ENCODE measurements at regions of chrX and their contacts with region 1.

Region 1: GRCh38 chrX:124476562-124476961 is 130.2 kb downstream of the SH2D1A start:
- DNase-seq: no peak
- ATAC-seq: no peak
- H3K4me3 ChIP-seq: no peak overlapping the region
- H3K27ac ChIP-seq: no peak overlapping the region
- H3K4me1 ChIP-seq: no peaks in the 10 kb centered on the region
- H3K27me3 ChIP-seq: no peaks in the 10 kb centered on the region
- CTCF ChIP-seq: no peak

Region 2: GRCh38 chrX:124015721-124016120 is 460.8 kb before region 1 on chrX:
- CTCF ChIA-PET with region 1: interaction called, 11 read pairs
- POLR2A ChIA-PET with region 1: no interaction called
- in situ Hi-C with region 1: no loop called
- intact Hi-C with region 1: no loop called
- DNase-seq: no peak
- ATAC-seq: no peak
- H3K4me3 ChIP-seq: no peak overlapping the region
- H3K27ac ChIP-seq: no peak overlapping the region
- H3K4me1 ChIP-seq: peaks cover 4% of the 10 kb centered on the region; the same call in 1 of the 2 replicates
- H3K27me3 ChIP-seq: no peaks in the 10 kb centered on the region
- CTCF ChIP-seq: no peak